Activated T-helper 1 cell treated with anti-CD3 and anti-CD28 coated beads, Interleukin-12 subunit alpha, Interleukin-12 subunit beta, Interleukin-2, Interleukin-4 antibody, amounts not matched to agents 30 ng/mL and 10 ng/mL and 1 ng/mL, durations not matched to agents 14 hours and 24 hours and 36 hours (primary cell): ENCODE measurements at regions of chr1 and their contacts with region 1.

Region 1: GRCh38 chr1:89746424-89747149 is 74.2 kb upstream of the LRRC8D start:
- DNase-seq: no peak
- H3K4me3 Mint-ChIP-seq: peak overlapping the region; percentile 28
- H3K27ac Mint-ChIP-seq: peak overlapping the region; percentile 86
- H3K4me1 Mint-ChIP-seq: peaks cover 40% of the 10 kb centered on the region
- H3K27me3 Mint-ChIP-seq: peaks cover 3% of the 10 kb centered on the region

Region 2: DNA sequence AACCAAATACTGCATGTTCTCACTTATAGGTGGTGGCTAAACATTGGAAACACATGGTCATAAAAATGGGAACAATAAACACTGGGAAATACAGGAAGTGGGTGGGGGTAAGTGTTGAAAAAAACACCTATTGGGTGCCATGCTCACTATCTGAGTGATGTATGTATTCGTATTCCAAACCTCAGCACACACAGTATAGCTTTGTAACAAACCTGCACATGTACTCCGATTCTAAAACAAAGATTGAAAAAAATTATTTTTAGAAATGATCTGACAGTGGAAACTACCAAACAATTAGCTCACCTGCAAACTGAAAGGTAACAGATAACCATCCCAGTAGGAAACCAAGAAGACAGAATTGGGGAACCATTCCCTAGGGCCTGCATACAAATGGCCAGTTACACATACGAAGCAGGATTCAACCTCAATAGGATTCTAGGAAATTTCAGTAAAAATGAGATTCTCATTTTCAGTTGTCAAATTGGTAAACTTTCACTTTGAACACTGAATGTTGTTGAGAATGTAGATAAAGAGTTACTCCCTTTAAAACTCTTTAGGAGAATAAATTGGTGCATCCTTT is 13.9 kb before region 1 on chr1:
- intact Hi-C with region 1: loop called (anchors 1 kb)
- DNase-seq: no peak
- H3K4me3 Mint-ChIP-seq: peak overlapping the region; percentile 47
- H3K27ac Mint-ChIP-seq: peak overlapping the region; percentile 86
- H3K4me1 Mint-ChIP-seq: peaks cover 73% of the 10 kb centered on the region
- H3K27me3 Mint-ChIP-seq: no peaks in the 10 kb centered on the region

Region 3: GRCh38 chr1:89771991-89772560 is 25.5 kb after region 1 on chr1:
- intact Hi-C with region 1: no loop called
- DNase-seq: no peak
- H3K4me3 Mint-ChIP-seq: no peak overlapping the region
- H3K27ac Mint-ChIP-seq: no peak overlapping the region
- H3K4me1 Mint-ChIP-seq: peaks cover 7% of the 10 kb centered on the region
- H3K27me3 Mint-ChIP-seq: no peaks in the 10 kb centered on the region

Region 4: DNA sequence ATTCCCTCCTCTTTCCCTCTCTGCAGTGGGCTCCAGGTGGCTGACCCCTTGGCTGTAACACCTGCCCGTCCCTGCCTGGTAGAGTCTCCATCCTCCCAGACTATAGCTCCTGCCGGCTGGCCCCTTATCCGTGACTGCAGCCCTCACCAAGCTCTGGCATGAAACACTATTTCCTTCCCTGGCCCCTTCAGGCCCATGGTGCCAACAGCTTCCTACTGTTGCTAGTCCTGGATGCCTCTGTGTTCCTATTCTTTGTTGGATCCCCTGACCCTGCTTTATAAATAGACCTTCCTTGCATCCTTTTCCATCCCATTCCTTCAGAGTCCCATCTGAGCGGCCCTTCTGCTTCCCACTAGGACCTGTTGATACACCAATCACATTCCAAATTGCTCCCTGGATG is 443.3 kb after region 1 on chr1:
- intact Hi-C with region 1: no loop called
- DNase-seq: no peak
- H3K4me3 Mint-ChIP-seq: no peak overlapping the region
- H3K27ac Mint-ChIP-seq: no peak overlapping the region
- H3K4me1 Mint-ChIP-seq: no peaks in the 10 kb centered on the region
- H3K27me3 Mint-ChIP-seq: peaks cover 1% of the 10 kb centered on the region